CD8-positive, alpha-beta T cell (primary cell): ENCODE measurements at regions of chr17 and their contacts with region 1.

Region 1: GRCh38 chr17:58352014-58352842 is at the start of gene SUPT4H1:
- DNase-seq: peak; percentile 81 to 97 (median 91)
- ATAC-seq: peak; percentile 88
- H3K4me3 ChIP-seq: peak within 1 kb of the TSS; percentile 69 to 70
- H3K4me3 Mint-ChIP-seq: peak within 1 kb of the TSS; percentile 100
- H3K27ac ChIP-seq: peak within 1 kb of the TSS; percentile 75 to 81
- H3K27ac Mint-ChIP-seq: peak within 1 kb of the TSS; percentile 100
- H3K4me1 ChIP-seq: peaks cover 46% of the 10 kb centered on the region
- H3K4me1 Mint-ChIP-seq: peaks cover 60% of the 10 kb centered on the region
- H3K27me3 ChIP-seq: no peaks in the 10 kb centered on the region
- H3K27me3 Mint-ChIP-seq: no peaks in the 10 kb centered on the region
- CTCF ChIP-seq: no peak
- total RNA-seq, gene SUPT4H1: 45.2 to 59.7 TPM

Region 2: DNA sequence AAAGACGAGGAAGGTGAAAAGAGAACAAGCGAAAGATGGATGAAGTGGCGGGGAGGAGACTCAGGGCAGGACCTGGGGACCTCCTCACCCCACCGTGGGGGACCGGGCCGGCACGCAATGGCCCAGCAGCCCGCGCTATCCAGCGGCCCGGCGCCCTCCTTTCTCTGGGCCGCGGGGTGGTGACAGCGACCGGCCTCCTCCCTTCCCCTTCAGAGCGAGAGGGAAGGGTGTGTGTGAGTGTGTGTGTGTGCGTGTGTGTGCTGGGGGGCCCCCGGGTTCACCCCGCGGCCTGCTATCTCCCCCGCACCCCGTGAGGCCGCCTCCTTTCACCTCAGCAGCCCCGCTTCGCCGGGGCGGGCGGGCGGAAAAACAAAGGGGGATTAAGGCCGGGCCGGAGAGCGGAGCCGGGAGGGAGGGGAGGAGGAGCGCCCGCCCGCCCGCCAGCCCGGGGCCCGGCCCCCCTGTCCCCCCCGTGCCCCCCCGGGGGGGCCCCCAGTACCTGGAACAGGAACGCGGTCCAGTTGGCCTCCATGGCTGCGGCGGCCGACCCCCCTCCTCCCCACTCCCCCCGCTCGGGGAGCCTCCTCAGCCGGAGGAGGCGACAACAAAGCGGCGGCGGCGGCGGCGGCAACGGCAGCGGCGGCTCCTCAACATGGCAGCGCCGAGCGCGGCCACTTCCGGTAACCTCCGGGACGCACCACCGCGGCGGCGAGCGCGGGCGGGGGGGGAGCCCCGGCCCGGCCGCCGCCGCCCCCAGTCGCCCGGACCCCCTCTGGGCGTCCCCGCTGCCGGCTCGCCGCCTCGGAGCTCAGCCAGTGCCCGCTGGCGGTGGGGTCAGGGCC is 364.4 kb before region 1 on chr17 and contains the start of gene VEZF1:
- CTCF ChIA-PET with region 1: no interaction called
- POLR2A ChIA-PET with region 1: no interaction called
- intact Hi-C with region 1: loop called in 1 of 2 experiments (anchors 1 kb)
- DNase-seq: peak; percentile 53 to 91 (median 79)
- ATAC-seq: peak; percentile 67
- H3K4me3 ChIP-seq: peak within 1 kb of the TSS; percentile 83 to 90
- H3K4me3 Mint-ChIP-seq: peak within 1 kb of the TSS; percentile 94
- H3K27ac ChIP-seq: peak within 1 kb of the TSS; percentile 57 to 72
- H3K27ac Mint-ChIP-seq: peak within 1 kb of the TSS; percentile 93
- H3K4me1 ChIP-seq: peaks cover 49% of the 10 kb centered on the region
- H3K4me1 Mint-ChIP-seq: peaks cover 63% of the 10 kb centered on the region
- H3K27me3 ChIP-seq: no peaks in the 10 kb centered on the region
- H3K27me3 Mint-ChIP-seq: no peaks in the 10 kb centered on the region
- CTCF ChIP-seq: no peak
- total RNA-seq, gene VEZF1: 45.2 to 46.6 TPM

Region 3: DNA sequence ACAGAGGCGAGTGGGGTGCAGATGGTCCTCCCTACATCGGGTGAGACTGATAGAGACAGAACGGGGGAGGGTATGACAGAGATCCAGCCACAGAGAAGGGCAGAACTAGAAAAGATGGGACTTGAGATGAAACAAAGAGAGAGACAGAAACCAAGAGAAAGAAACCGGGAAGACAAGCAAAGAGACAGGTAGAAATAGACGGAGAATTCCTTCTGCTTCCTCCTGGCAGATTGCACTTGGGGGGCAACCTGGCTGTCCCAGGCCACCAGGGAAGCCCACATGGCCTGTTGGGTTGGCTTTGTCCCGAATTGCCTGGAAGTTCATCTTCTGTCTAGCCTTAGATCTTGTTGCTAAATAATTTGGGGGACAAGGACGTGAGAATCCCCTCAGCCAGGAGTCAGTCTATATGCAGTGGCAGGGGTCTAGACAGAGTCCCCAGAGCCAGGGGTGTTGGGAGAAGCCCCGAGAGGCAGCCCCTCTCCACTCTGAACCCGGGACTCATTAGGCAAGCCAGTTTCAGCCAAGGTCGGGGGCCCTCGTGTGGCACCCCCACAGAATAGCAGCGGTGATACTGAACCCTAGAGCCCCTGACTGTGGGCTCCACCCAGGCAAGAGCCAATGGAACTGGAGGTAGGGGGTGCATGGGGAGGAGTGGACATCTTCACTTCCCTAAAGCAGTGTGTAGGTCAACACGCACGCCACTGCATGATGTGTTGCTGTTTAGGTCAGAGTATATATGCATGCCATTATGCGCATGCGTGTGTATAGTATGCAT is 23.0 kb before region 1 on chr17:
- CTCF ChIA-PET with region 1: interaction called, 587 read pairs
- POLR2A ChIA-PET with region 1: interaction called, 773 read pairs
- intact Hi-C with region 1: loop called (anchors 1 kb)
- DNase-seq: peak in 8 of 9 experiments; percentile 56 to 90 (median 77)
- ATAC-seq: peak; percentile 36
- H3K4me3 ChIP-seq: peak overlapping the region; percentile 90 to 99
- H3K4me3 Mint-ChIP-seq: peak overlapping the region; percentile 92
- H3K27ac ChIP-seq: peak overlapping the region; percentile 48 to 99
- H3K27ac Mint-ChIP-seq: peak overlapping the region; percentile 96
- H3K4me1 ChIP-seq: peaks cover 47% of the 10 kb centered on the region
- H3K4me1 Mint-ChIP-seq: peaks cover 54% of the 10 kb centered on the region
- H3K27me3 ChIP-seq: no peaks in the 10 kb centered on the region
- H3K27me3 Mint-ChIP-seq: no peaks in the 10 kb centered on the region
- CTCF ChIP-seq: peak; percentile 84

Region 4: DNA sequence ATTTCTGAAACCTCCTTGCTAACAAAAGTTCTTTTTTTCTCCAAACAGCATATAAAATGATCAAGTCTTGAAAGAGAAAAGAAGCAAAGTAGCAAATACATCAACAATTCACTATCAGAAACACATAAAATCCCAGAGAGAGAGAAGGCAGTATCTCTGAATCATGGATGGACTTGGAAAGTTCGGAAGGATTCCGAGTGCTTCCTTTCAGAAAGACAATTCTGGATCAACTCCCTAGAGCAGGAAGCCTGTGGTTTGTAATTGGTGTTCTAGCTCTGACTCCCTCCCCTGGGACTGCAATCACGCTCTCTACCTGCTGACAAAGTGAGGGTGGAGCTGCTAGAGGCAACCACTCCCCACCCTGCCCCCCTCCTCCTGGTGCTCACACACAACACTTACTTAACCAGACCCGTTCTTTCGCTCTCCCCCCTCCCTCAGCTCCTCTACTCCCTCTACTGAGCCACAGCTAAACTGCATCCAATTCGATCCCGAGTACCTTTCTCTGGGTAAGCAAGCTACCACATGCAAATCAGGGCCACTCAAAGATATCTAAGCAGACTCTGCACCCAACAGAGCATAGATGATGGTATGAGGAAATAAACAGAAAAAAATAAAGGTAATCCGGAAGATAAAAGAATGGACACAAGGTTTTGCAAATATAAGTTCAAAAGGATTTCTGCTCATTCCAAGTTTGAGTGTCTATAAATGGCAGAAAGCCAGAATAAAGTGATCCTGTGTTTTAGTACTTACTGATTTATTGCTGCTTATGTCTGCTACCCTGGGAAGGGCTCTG is 65.3 kb after region 1 on chr17 and contains the start of gene RNF43:
- CTCF ChIA-PET with region 1: interaction called, 8 read pairs
- POLR2A ChIA-PET with region 1: interaction called, 34 read pairs
- intact Hi-C with region 1: loop called (anchors 1 kb)
- DNase-seq: peak; percentile 70 to 96 (median 87)
- ATAC-seq: peak; percentile 100
- H3K4me3 ChIP-seq: no peak within 1 kb of the TSS
- H3K4me3 Mint-ChIP-seq: no peak within 1 kb of the TSS
- H3K27ac ChIP-seq: peak within 1 kb of the TSS in 1 of 2 experiments; percentile 47
- H3K27ac Mint-ChIP-seq: peak within 1 kb of the TSS; percentile 3
- H3K4me1 ChIP-seq: peaks cover 15% of the 10 kb centered on the region
- H3K4me1 Mint-ChIP-seq: peaks cover 17% of the 10 kb centered on the region
- H3K27me3 ChIP-seq: no peaks in the 10 kb centered on the region
- H3K27me3 Mint-ChIP-seq: no peaks in the 10 kb centered on the region
- CTCF ChIP-seq: peak; percentile 75
- total RNA-seq, gene RNF43: 0.61 to 1.0 TPM

Region 5: GRCh38 chr17:58595326-58595725 is 243.1 kb after region 1 on chr17:
- CTCF ChIA-PET with region 1: no interaction called
- POLR2A ChIA-PET with region 1: no interaction called
- intact Hi-C with region 1: no loop called
- DNase-seq: no peak
- ATAC-seq: no peak
- H3K4me3 ChIP-seq: no peak overlapping the region
- H3K4me3 Mint-ChIP-seq: no peak overlapping the region
- H3K27ac ChIP-seq: no peak overlapping the region
- H3K27ac Mint-ChIP-seq: no peak overlapping the region
- H3K4me1 ChIP-seq: no peaks in the 10 kb centered on the region
- H3K4me1 Mint-ChIP-seq: no peaks in the 10 kb centered on the region
- H3K27me3 ChIP-seq: no peaks in the 10 kb centered on the region
- H3K27me3 Mint-ChIP-seq: no peaks in the 10 kb centered on the region
- CTCF ChIP-seq: no peak

Region 6: DNA sequence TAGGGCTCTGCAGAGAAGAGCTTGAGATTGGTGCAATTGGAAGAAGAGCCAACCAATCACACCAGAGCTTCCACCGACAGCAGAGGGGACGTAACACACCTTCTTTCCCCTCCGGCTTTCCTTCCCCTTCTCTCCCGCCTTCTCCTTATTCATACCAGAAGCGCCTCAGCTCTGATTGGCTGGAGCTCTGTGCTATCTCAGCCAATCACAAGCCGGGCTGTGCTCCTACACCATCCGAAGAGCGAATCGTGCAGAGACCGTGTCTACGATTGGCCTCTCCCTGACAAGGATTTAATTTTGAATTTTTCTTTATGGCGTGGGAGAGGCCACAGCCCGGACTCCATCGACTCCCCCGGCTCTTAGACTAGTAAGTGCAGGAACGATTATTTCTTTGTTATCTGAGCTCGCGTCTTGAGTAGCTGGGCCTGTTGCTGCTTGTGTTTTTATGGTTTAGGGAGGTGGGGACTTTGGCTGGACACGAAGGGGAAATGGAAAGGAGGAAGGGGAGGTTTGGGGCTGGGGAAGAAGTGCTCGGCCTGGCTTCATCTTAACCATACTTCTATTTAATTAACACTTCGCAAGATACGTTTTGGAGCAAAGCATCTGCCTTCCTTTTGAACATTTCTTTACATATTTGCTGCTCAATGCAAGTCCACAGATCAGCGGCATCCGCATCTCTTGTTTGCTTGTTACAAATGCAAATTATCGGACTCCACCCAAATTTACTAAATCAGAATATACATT is 803.4 kb after region 1 on chr17 and contains the start of gene PRR11:
- CTCF ChIA-PET with region 1: no interaction called
- POLR2A ChIA-PET with region 1: no interaction called
- intact Hi-C with region 1: loop called in 1 of 2 experiments (anchors 10 kb)
- DNase-seq: peak; percentile 82 to 99 (median 90)
- ATAC-seq: peak; percentile 85
- H3K4me3 ChIP-seq: peak within 1 kb of the TSS; percentile 95 to 97
- H3K4me3 Mint-ChIP-seq: no peak within 1 kb of the TSS
- H3K27ac ChIP-seq: peak within 1 kb of the TSS; percentile 62 to 74
- H3K27ac Mint-ChIP-seq: no peak within 1 kb of the TSS
- H3K4me1 ChIP-seq: peaks cover 15% of the 10 kb centered on the region
- H3K4me1 Mint-ChIP-seq: peaks cover 28% of the 10 kb centered on the region
- H3K27me3 ChIP-seq: no peaks in the 10 kb centered on the region
- H3K27me3 Mint-ChIP-seq: no peaks in the 10 kb centered on the region
- CTCF ChIP-seq: no peak
- total RNA-seq, gene PRR11: 0.30 to 0.69 TPM

Region 7: DNA sequence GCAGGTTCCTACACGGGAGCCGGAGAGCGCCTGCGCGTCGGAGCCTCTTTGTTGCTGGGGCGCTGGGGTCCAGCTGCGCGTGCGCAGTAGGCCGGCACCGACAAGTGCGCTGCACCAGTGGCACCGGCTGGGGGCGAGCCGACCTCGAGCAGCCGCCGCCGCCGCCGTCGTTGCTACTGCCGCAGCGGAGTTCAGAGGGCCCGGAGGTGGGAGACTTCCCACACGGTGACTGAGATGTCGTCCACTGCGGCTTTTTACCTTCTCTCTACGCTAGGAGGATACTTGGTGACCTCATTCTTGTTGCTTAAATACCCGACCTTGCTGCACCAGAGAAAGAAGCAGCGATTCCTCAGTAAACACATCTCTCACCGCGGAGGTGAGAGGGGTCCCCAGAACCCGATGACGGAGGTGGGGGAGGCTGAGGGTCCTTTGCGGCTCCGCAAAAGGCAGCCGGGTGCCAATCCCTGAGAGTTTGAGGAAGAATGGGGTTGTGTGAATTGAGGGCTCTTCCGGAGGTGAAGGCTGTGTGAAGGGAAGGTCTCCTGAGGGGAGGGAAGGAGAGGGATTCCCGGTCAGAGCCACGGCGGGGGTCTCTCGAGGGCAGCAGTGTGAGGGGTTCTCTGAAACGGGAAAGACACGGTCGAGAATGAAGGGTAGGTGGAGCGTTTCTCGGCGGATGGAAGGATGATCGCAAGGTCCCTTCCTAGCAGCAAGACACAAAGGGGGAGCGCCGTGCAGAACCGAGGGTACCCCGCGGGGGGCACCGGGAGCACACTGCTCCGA is 868.3 kb after region 1 on chr17 and contains the start of gene GDPD1:
- CTCF ChIA-PET with region 1: no interaction called
- POLR2A ChIA-PET with region 1: no interaction called
- intact Hi-C with region 1: loop called in 1 of 2 experiments (anchors 10 kb)
- DNase-seq: peak; percentile 94 to 99 (median 97)
- ATAC-seq: peak; percentile 96
- H3K4me3 ChIP-seq: peak within 1 kb of the TSS; percentile 97 to 100
- H3K4me3 Mint-ChIP-seq: peak within 1 kb of the TSS; percentile 98
- H3K27ac ChIP-seq: peak within 1 kb of the TSS; percentile 91 to 92
- H3K27ac Mint-ChIP-seq: peak within 1 kb of the TSS; percentile 99
- H3K4me1 ChIP-seq: peaks cover 4% of the 10 kb centered on the region
- H3K4me1 Mint-ChIP-seq: peaks cover 13% of the 10 kb centered on the region
- H3K27me3 ChIP-seq: no peaks in the 10 kb centered on the region
- H3K27me3 Mint-ChIP-seq: no peaks in the 10 kb centered on the region
- CTCF ChIP-seq: peak; percentile 71
- total RNA-seq, gene GDPD1: 1.1 to 1.8 TPM